Adrenal gland (tissue), 19 donors: ENCODE measurements at regions of chr9 and their contacts with region 1.

Region 1: DNA sequence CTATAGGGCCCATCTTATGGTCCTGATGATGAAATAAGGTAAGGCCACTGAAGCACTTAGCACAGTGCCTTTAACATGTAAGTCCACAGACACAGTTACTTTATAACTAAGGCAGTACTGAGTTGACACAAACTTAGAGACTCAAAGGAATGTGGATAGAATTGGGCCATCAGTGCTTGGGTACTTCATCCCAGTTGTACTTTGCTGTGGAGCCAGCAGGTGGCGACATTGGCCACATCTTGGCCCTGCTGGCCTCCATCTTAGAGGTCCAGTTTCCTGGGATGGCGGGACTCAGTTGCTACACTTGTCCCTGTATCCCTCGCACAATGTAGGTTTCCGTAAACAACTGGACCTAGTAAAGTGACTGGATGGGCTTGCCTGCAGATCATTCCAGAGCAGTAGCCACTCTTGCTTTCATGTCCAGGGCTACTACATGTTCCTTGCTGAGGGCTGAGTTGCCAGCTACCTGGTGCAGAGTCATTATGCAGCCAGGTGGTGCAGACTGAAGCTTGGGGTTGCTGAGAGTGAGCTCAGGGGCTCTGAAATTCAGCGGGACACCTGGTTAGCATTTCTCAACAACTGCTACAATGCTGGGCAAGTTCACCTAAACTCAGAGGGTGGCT is 10.6 kb downstream of the MTAP start:
- DNase-seq: peak; percentile 51 to 90 (median 83)
- H3K4me3 ChIP-seq: no peak overlapping the region
- H3K27ac ChIP-seq: peak overlapping the region in 2 of 5 donors; percentile 43 to 57
- H3K4me1 ChIP-seq: peaks cover 0 to 7% of the 10 kb centered on the region in 2 donors
- H3K27me3 ChIP-seq: no peaks in the 10 kb centered on the region
- CTCF ChIP-seq: peak; percentile 86 to 94 (median 90)
- POLR2A ChIP-seq: no peak

Region 2: GRCh38 chr9:21995177-21996086 is 182.4 kb after region 1 on chr9:
- intact Hi-C with region 1: loop called in 1 of 2 experiments (anchors 10 kb)
- DNase-seq: peak; percentile 71 to 86 (median 81)
- H3K4me3 ChIP-seq: peak overlapping the region; percentile 42 to 93 (median 66)
- H3K27ac ChIP-seq: peak overlapping the region; percentile 72 to 93 (median 89)
- H3K4me1 ChIP-seq: peaks cover 0 to 9% of the 10 kb centered on the region in 2 donors
- H3K27me3 ChIP-seq: no peaks in the 10 kb centered on the region
- CTCF ChIP-seq: peak in 3 of 6 experiments; percentile 14 to 26 (median 17)
- POLR2A ChIP-seq: peak in 1 of 2 donors; percentile 44

Region 3: GRCh38 chr9:22026696-22027095 is 213.6 kb after region 1 on chr9:
- intact Hi-C with region 1: loop called (anchors 10 kb)
- DNase-seq: no peak
- H3K4me3 ChIP-seq: no peak overlapping the region
- H3K27ac ChIP-seq: no peak overlapping the region
- H3K4me1 ChIP-seq: no peaks in the 10 kb centered on the region
- H3K27me3 ChIP-seq: no peaks in the 10 kb centered on the region
- CTCF ChIP-seq: no peak
- POLR2A ChIP-seq: no peak

Region 4: DNA sequence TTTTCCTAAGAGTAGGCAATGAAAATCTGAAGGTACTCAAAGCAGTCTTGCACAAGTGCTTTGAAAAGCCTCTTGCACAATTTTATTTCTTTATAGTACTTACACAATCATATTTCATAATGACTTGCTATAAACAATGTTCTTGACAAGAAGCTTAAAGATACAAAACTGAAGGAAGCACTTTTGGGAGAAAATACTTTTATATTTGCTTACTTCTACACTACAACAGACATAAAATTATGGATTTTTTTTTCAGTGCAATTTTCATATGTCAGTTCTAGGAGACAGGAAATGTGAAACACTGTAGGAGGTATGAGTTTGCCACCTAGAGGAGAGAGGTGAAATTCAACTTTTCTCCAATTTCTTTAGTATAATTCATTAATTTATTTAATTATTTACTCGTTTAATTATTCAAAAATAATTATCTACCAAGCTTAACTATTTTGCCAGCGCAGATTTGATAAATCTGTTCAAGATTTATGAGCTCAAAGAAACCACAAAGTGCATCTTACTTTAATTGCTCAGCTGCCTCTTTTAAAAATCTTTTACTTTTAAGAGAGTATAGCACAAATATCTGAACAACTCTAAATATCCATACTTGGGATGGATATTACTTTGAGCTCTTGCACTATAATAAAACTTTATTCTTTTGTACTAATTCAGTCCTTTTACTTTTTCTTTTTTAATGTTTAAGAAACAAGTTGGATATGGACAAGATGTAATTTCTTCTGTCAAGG is 225.1 kb after region 1 on chr9:
- intact Hi-C with region 1: loop called in 1 of 2 experiments (anchors 10 kb)
- DNase-seq: no peak
- H3K4me3 ChIP-seq: peak overlapping the region in 1 of 4 donors; percentile 0
- H3K27ac ChIP-seq: no peak overlapping the region
- H3K4me1 ChIP-seq: peaks cover 0 to 15% of the 10 kb centered on the region in 2 donors
- H3K27me3 ChIP-seq: no peaks in the 10 kb centered on the region
- CTCF ChIP-seq: peak; percentile 27 to 68 (median 50)
- POLR2A ChIP-seq: no peak

Region 5: DNA sequence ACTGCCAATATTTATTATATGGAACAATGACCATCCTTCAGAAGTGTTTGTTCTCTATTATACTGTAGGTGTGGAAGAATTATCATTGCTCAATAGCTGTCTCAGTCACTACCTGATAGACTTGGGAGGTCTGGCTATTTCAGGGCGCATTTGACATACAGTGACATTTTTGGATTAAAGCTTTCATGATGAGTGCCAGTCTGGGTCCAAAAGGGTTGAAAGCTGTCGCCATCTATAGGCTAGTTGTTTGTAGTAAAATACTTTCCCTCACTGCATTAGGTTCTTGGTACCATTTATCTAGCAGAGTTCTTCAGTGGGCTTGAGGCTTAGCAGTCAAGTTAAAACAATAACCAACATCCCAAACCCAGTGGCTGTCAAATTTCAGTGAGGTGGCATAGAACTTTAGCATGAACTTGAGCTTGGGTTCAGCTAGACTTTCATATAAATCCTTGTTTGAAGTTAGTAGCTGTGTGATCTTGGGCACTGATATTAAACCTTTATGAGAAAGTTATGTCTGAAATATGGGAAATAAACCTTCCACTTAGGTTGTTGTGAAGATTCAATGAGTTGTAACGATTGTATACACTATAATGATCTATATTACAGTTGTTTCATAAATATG is 306.6 kb after region 1 on chr9:
- intact Hi-C with region 1: loop called (anchors 5 to 10 kb)
- DNase-seq: peak in 3 of 7 donors; percentile 16 to 35 (median 27)
- H3K4me3 ChIP-seq: no peak overlapping the region
- H3K27ac ChIP-seq: no peak overlapping the region
- H3K4me1 ChIP-seq: no peaks in the 10 kb centered on the region
- H3K27me3 ChIP-seq: no peaks in the 10 kb centered on the region
- CTCF ChIP-seq: peak; percentile 22 to 58 (median 52)
- POLR2A ChIP-seq: no peak

Region 6: GRCh38 chr9:22238809-22239684 is 426.0 kb after region 1 on chr9:
- intact Hi-C with region 1: loop called (anchors 5 to 10 kb)
- DNase-seq: peak in 1 of 7 donors; percentile 8
- H3K4me3 ChIP-seq: no peak overlapping the region
- H3K27ac ChIP-seq: no peak overlapping the region
- H3K4me1 ChIP-seq: peaks cover 0 to 7% of the 10 kb centered on the region in 2 donors
- H3K27me3 ChIP-seq: no peaks in the 10 kb centered on the region
- CTCF ChIP-seq: peak in 4 of 6 experiments; percentile 28 to 56 (median 44)
- POLR2A ChIP-seq: no peak